ENCODE measurements at regions of chr1 and their contacts with region 1.

Region 1: DNA sequence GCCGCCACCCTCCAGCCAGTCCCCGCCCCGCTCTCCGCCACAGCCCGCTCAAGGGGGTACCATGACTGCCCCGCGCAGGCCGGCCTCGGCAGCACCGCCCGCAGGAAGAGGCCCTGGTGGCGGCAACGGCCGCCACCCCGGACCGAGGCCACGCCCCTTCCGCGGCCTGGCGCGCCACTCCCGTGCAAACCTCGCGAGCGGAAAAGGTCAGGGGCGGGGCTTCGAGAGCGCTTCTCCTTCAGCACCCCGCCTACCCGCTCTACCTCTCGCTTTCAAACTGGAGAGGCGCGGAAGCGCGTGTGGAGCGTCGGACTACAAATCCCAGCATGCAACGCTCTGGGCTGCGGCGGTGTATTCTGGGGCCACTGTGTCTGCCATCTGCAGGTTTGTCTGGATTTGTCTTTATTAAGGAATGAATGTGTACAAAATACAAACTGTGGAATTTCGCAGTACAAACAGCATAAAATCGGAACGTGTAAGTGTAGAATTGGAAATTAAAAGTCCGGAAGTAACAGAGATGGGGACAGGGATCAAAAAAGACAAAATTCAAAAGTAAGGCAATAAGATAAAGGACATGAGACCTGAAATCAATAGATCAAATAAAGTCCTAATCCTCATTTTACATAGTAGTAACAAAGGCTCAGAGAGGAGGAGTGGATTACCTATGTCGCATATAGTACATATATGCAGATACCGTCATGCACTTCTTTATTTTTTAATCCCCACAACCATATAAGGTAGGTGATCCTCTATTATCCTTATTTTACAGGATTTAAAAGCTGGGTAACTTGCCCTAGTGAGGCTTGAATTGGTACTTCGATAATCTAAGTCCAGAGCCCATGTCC is 464 bp upstream of the ADSS2 start:
- DNase-seq: peak; percentile 97 to 100 (median 99)
- ATAC-seq: peak; percentile 83
- H3K4me3 ChIP-seq: peak overlapping the region; percentile 78 to 95
- H3K4me3 Mint-ChIP-seq: peak overlapping the region; percentile 91
- H3K27ac ChIP-seq: peak overlapping the region; percentile 95 to 96
- H3K27ac Mint-ChIP-seq: peak overlapping the region; percentile 97
- H3K4me1 ChIP-seq: peaks cover 32% of the 10 kb centered on the region
- H3K4me1 Mint-ChIP-seq: peaks cover 45% of the 10 kb centered on the region
- H3K27me3 ChIP-seq: no peaks in the 10 kb centered on the region
- H3K27me3 Mint-ChIP-seq: no peaks in the 10 kb centered on the region
- CTCF ChIP-seq: peak; percentile 55

Region 2: DNA sequence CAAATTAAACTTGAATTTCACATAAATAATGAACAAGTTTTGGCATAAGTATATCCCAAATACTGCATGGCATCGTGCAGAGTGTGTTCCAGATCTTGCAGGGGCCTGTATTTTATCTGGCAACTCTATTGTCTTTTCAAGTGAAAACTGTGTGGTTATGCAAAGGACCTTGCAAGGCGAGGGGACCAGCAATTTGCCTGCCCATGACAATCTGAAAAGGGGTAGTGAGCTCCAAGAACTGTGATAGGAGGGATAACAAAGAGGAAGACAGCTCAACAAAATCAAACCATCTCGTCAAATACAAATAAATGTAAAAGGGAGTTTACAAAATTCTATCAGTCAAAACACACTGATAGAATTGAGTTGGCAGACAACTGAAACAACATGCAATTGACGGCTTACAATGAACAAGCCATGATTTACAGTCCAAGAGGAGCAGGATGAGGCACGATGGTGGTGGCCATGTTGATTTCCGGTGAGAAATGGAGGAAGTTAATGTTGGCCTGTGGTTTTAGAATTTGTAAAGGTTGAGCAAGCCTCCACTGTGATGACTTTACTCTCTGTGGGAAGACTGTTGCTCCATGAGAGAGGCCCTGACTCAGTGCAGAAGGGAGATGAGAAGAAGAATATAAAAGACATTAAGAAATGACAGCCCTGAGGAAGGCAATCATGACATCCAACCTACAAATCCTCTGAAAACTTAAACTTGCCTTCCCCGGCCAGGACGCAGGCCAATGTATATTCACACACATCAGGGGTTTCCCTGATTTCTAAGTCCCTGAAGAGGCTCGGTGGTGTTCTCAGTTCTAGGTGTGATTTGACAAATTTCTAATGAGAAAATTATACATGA is 132.7 kb before region 1 on chr1:
- CTCF ChIA-PET with region 1: no interaction called
- POLR2A ChIA-PET with region 1: no interaction called
- intact Hi-C with region 1: loop called in 1 of 2 experiments (anchors 5 kb)
- DNase-seq: peak in 8 of 9 experiments; percentile 10 to 86 (median 50)
- ATAC-seq: peak; percentile 79
- H3K4me3 ChIP-seq: no peak overlapping the region
- H3K4me3 Mint-ChIP-seq: peak overlapping the region; percentile 17
- H3K27ac ChIP-seq: peak overlapping the region in 1 of 2 experiments; percentile 69
- H3K27ac Mint-ChIP-seq: peak overlapping the region; percentile 86
- H3K4me1 ChIP-seq: no peaks in the 10 kb centered on the region
- H3K4me1 Mint-ChIP-seq: peaks cover 30% of the 10 kb centered on the region
- H3K27me3 ChIP-seq: no peaks in the 10 kb centered on the region
- H3K27me3 Mint-ChIP-seq: no peaks in the 10 kb centered on the region
- CTCF ChIP-seq: no peak

Region 3: GRCh38 chr1:244391761-244392160 is 60.4 kb before region 1 on chr1:
- CTCF ChIA-PET with region 1: no interaction called
- POLR2A ChIA-PET with region 1: no interaction called
- intact Hi-C with region 1: no loop called
- DNase-seq: peak in 1 of 9 experiments; percentile 21
- ATAC-seq: no peak
- H3K4me3 ChIP-seq: no peak overlapping the region
- H3K4me3 Mint-ChIP-seq: no peak overlapping the region
- H3K27ac ChIP-seq: no peak overlapping the region
- H3K27ac Mint-ChIP-seq: no peak overlapping the region
- H3K4me1 ChIP-seq: no peaks in the 10 kb centered on the region
- H3K4me1 Mint-ChIP-seq: peaks cover 7% of the 10 kb centered on the region
- H3K27me3 ChIP-seq: no peaks in the 10 kb centered on the region
- H3K27me3 Mint-ChIP-seq: no peaks in the 10 kb centered on the region
- CTCF ChIP-seq: no peak

Region 4: GRCh38 chr1:244435562-244436205 is 16.5 kb before region 1 on chr1:
- CTCF ChIA-PET with region 1: interaction called, 4 read pairs
- POLR2A ChIA-PET with region 1: interaction called, 3 read pairs
- intact Hi-C with region 1: loop called in 1 of 2 experiments (anchors 2 kb)
- DNase-seq: no peak
- ATAC-seq: no peak
- H3K4me3 ChIP-seq: no peak overlapping the region
- H3K4me3 Mint-ChIP-seq: no peak overlapping the region
- H3K27ac ChIP-seq: no peak overlapping the region
- H3K27ac Mint-ChIP-seq: peak overlapping the region; percentile 57
- H3K4me1 ChIP-seq: no peaks in the 10 kb centered on the region
- H3K4me1 Mint-ChIP-seq: peaks cover 37% of the 10 kb centered on the region
- H3K27me3 ChIP-seq: no peaks in the 10 kb centered on the region
- H3K27me3 Mint-ChIP-seq: no peaks in the 10 kb centered on the region
- CTCF ChIP-seq: no peak

Region 5: GRCh38 chr1:244513493-244513892 is 61.3 kb after region 1 on chr1:
- CTCF ChIA-PET with region 1: no interaction called
- POLR2A ChIA-PET with region 1: no interaction called
- intact Hi-C with region 1: no loop called
- DNase-seq: no peak
- ATAC-seq: no peak
- H3K4me3 ChIP-seq: no peak overlapping the region
- H3K4me3 Mint-ChIP-seq: no peak overlapping the region
- H3K27ac ChIP-seq: no peak overlapping the region
- H3K27ac Mint-ChIP-seq: no peak overlapping the region
- H3K4me1 ChIP-seq: no peaks in the 10 kb centered on the region
- H3K4me1 Mint-ChIP-seq: no peaks in the 10 kb centered on the region
- H3K27me3 ChIP-seq: no peaks in the 10 kb centered on the region
- H3K27me3 Mint-ChIP-seq: no peaks in the 10 kb centered on the region
- CTCF ChIP-seq: no peak